ENCODE measurements at regions of chr7 and their contacts with region 1.

Region 1: DNA sequence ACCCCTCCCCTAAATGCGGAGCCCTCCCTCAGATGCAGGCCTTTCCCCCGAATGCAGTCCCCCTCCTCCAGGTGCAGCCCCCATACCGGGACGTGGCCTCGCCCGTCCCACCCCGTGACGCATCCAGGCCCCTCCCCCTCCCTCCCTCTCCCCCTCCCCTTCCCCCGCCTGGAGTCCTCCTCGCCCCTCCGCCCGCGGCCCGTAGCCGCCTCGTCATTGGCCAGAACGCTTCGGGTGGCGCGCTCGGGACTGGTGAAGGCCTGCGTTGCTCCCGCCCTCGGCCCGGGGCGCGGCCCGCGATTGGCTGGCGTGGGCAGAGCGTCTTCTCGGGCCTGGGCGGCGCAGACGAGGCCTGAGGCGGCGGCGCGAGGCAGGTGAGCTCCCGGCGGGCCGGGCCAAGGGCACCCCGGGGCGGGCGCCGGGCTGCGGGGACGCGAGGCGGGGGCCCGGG is 16.0 kb upstream of the SUN1 start:
- DNase-seq: peak; percentile 96
- H3K4me3 Mint-ChIP-seq: no peak overlapping the region
- H3K27ac Mint-ChIP-seq: no peak overlapping the region
- H3K4me1 Mint-ChIP-seq: peaks cover 55% of the 10 kb centered on the region
- H3K27me3 Mint-ChIP-seq: peaks cover 19% of the 10 kb centered on the region

Region 2: DNA sequence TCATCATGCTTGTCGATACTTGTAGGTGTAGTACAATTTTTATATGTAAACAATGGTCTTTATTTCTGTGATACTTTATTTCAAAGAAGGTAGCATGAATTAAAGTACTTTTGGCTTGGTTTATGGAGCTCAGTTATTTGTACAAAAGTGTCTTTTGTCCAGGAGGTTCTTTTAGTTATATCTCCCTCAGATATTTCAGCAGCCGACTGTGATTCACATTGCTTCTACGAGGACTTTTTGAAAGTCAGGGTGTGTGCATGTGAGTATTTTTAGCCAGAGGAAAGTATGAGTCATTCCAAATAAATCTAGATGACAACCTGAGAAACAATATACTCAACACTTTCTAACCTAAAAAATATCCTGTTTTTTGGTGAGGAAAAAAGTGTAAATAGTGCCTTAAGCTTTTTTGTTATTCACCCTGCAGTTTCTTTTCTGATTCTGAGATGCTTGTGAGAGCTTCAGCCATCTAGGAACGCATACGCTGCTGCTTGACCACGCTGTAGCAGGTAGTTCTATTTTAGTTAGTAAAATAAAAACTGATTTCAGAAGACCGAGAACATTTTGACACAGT is 15.4 kb after region 1 on chr7:
- intact Hi-C with region 1: loop called (anchors 1 kb)
- DNase-seq: no peak
- H3K4me3 Mint-ChIP-seq: peak overlapping the region; percentile 80
- H3K27ac Mint-ChIP-seq: peak overlapping the region; percentile 93
- H3K4me1 Mint-ChIP-seq: peaks cover 30% of the 10 kb centered on the region
- H3K27me3 Mint-ChIP-seq: no peaks in the 10 kb centered on the region

Measured in activated T-helper 1 cell treated with anti-CD3 and anti-CD28 coated beads, Interleukin-12 subunit alpha, Interleukin-12 subunit beta, Interleukin-2, Interleukin-4 antibody, amounts not matched to agents 30 ng/mL and 10 ng/mL and 1 ng/mL, durations not matched to agents 14 hours and 24 hours and 36 hours (primary cell).